ENCODE measurements at regions of chr1 and their contacts with region 1.

Region 1: DNA sequence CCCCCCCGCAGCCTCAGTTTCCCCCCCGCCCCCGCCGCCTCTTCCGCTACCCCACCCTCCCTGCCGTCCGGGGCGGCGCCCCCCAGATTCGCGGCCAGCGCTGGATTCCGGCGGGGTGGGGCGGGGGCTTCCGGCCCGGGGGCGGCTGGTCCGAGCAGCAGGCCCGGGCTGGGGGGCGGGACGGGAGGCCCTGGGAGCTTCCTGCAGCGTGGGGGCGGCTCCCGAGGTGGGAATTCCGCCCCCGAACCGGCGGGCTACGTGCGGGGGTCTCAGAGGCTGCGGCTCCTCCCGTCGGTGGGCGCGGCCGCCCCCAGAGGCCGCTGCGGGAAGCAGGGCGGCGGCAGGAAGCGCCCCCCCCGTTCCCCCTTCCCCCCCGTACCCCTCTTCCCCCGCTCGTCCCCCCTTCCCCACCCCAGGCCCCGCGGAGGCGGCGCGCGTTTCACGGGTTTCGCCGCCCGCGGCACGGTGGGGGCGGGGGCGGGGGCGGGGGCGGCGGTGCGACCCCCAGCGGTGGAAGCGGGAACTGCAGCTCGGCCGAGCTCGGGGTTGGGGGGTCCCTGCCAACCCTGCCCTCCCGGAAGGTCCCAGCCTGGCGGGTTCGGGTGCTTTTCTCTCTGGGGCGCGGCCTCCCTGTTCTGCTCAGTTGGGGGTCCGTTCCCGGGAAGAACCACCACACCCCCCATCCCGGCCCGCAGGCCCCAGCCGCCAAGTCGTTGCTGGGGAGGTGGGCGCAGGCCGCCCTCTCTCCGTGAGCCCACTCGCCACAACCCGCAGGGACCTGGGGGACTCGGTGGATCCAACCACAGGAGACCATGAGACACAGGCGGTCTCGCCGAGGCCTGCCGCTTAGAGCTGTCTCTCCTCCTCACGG is 76.3 kb downstream of the MORN1 start:
- DNase-seq: no peak
- ATAC-seq: peak; percentile 44
- H3K4me3 ChIP-seq: peak overlapping the region; percentile 42 to 50
- H3K27ac ChIP-seq: peak overlapping the region; percentile 73; the same call in 1 of the 2 replicates
- H3K4me1 ChIP-seq: peaks cover 61% of the 10 kb centered on the region
- H3K27me3 ChIP-seq: no peaks in the 10 kb centered on the region
- CTCF ChIP-seq: peak; percentile 97

Region 2: GRCh38 chr1:1358433-1359261 is 956.4 kb before region 1 on chr1 and contains the start of gene MXRA8:
- CTCF ChIA-PET with region 1: no interaction called
- POLR2A ChIA-PET with region 1: interaction called, 13 read pairs
- in situ Hi-C with region 1: no loop called
- intact Hi-C with region 1: no loop called
- DNase-seq: no peak
- ATAC-seq: peak; percentile 15
- H3K4me3 ChIP-seq: peak within 1 kb of the TSS; percentile 44 to 49
- H3K27ac ChIP-seq: peak within 1 kb of the TSS; percentile 93
- H3K4me1 ChIP-seq: peaks cover 62% of the 10 kb centered on the region
- H3K27me3 ChIP-seq: no peaks in the 10 kb centered on the region
- CTCF ChIP-seq: no peak
- total RNA-seq, gene MXRA8: 96.0 TPM

Region 3: GRCh38 chr1:2233997-2234761 is 80.9 kb before region 1 on chr1:
- CTCF ChIA-PET with region 1: interaction called, 3 read pairs
- POLR2A ChIA-PET with region 1: interaction called, 3 read pairs
- in situ Hi-C with region 1: no loop called
- intact Hi-C with region 1: loop called (anchors 5 kb)
- DNase-seq: no peak
- ATAC-seq: no peak
- H3K4me3 ChIP-seq: peak overlapping the region in 1 of 2 experiments; percentile 20; a peak in 1 of 4 replicates
- H3K27ac ChIP-seq: no peak overlapping the region; the same call in 1 of the 2 replicates
- H3K4me1 ChIP-seq: peaks cover 42% of the 10 kb centered on the region
- H3K27me3 ChIP-seq: no peaks in the 10 kb centered on the region
- CTCF ChIP-seq: no peak

Measured in Panc1 (cell line).